Activated CD4-positive, alpha-beta T cell treated with anti-CD3 and anti-CD28 coated beads for 36 hours (primary cell): ENCODE measurements at regions of chr7 and their contacts with region 1.

Region 1: DNA sequence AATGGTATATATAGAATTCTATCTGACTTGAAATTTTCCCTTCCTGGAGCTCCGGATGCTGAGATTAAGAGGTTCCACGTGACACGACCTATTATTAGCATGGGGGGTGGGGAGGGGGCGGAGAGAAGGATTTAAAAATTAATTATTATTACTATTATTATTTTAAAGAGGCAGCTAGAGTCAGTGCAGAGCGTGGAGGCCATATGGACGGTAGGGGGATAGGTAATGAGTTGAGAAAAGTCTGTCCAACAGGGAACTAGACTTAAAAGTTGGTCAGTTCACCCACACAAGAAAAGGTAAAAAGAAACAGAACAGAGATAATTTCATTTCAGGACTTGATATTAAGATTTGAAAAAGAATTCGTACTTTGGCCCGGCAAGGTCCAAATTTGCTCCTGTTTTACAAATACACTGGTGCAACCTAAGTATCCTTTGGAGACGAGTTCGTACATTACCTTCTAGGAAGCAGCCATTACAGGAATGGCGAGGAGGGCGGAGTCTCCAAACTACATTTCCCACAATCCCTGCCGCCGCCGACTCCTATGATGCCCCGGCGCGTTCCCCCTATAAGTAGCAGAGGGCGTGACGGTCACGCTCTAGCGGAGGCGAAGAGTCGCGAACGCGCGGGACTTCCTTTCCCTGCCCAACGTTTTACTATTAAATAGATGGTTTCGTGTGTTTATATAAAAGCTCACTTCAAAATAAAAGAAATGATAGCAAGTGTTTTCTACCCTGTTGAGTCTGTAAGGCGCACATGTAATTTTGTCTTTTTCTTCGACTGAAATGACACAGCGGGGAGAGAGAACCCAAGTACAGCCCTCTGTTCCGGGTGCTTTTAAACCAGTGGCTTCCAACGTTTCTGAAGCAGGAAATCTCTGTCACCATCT is at the start of gene SMIM30:
- DNase-seq: peak; percentile 93
- ATAC-seq: peak; percentile 95
- H3K4me3 Mint-ChIP-seq: peak within 1 kb of the TSS; percentile 80
- H3K27ac Mint-ChIP-seq: peak within 1 kb of the TSS; percentile 82
- H3K4me1 Mint-ChIP-seq: peaks cover 34% of the 10 kb centered on the region
- H3K27me3 Mint-ChIP-seq: no peaks in the 10 kb centered on the region
- total RNA-seq, gene SMIM30: 36.0 to 38.5 TPM

Region 2: GRCh38 chr7:112556633-112557032 is 561.7 kb before region 1 on chr7:
- CTCF ChIA-PET with region 1: no interaction called
- POLR2A ChIA-PET with region 1: no interaction called
- intact Hi-C with region 1: loop called in 1 of 2 experiments (anchors 5 kb)
- DNase-seq: peak; percentile 21
- ATAC-seq: peak; percentile 97
- H3K4me3 Mint-ChIP-seq: no peak overlapping the region
- H3K27ac Mint-ChIP-seq: no peak overlapping the region
- H3K4me1 Mint-ChIP-seq: peaks cover 19% of the 10 kb centered on the region
- H3K27me3 Mint-ChIP-seq: no peaks in the 10 kb centered on the region

Region 3: DNA sequence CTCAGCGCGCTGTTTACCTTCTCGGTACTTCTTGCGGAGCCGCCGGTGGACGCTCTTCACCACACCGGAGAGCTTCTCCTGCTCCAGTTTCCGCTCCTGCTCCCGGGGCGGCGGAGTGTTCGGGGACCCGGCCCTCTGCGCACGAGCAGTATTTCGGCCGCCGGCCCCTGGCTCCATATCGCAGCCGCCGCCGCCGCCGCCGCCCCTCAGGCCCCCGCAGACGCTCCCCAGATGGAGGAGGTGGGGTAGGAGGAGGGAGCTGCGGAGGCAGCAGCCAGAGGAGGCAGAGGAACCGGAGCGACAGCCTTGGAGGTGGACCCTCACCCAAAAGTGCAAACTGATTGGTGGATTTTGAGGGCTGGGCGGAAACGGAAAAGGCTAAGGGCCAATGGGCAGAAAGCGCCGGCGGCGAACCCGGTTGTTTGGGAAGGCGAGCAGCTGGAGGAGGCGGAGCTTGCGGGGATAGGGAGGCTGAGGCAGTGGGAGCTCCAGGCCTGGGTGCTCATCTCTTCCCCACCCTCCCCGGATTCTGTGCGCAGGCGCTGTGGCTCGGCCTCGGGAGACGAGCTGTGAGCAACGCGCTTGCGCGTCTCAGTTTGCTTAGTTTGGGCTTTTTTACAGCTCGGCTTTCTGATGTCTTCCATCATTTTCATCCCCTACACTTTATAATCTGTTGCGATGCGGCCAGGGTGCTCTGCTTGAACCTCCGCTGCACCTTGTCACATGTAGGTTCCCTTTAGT is 178.6 kb before region 1 on chr7:
- CTCF ChIA-PET with region 1: interaction called, 3 read pairs
- POLR2A ChIA-PET with region 1: no interaction called
- intact Hi-C with region 1: loop called (anchors 1 kb)
- DNase-seq: peak; percentile 99
- ATAC-seq: peak; percentile 97
- H3K4me3 Mint-ChIP-seq: peak overlapping the region; percentile 80
- H3K27ac Mint-ChIP-seq: peak overlapping the region; percentile 96
- H3K4me1 Mint-ChIP-seq: peaks cover 28% of the 10 kb centered on the region
- H3K27me3 Mint-ChIP-seq: no peaks in the 10 kb centered on the region

Region 4: GRCh38 chr7:113141803-113142202 is 23.5 kb after region 1 on chr7:
- CTCF ChIA-PET with region 1: no interaction called
- POLR2A ChIA-PET with region 1: no interaction called
- intact Hi-C with region 1: no loop called
- DNase-seq: no peak
- ATAC-seq: no peak
- H3K4me3 Mint-ChIP-seq: no peak overlapping the region
- H3K27ac Mint-ChIP-seq: no peak overlapping the region
- H3K4me1 Mint-ChIP-seq: no peaks in the 10 kb centered on the region
- H3K27me3 Mint-ChIP-seq: peaks cover 13% of the 10 kb centered on the region